Activated CD4-positive, alpha-beta T cell treated with anti-CD3 and anti-CD28 coated beads, Interleukin-2, amount 10 ng/mL, durations not matched to agents 24 days and 14 days (primary cell): ENCODE measurements at regions of chr6 and their contacts with region 1.

Region 1: GRCh38 chr6:121247386-121247785 is 86.9 kb downstream of the TBC1D32 start:
- DNase-seq: no peak
- H3K4me3 Mint-ChIP-seq: peak overlapping the region; percentile 9
- H3K27ac Mint-ChIP-seq: peak overlapping the region; percentile 9
- H3K4me1 Mint-ChIP-seq: peaks cover 12% of the 10 kb centered on the region
- H3K27me3 Mint-ChIP-seq: no peaks in the 10 kb centered on the region

Region 2: GRCh38 chr6:121334299-121335086 is 87.1 kb after region 1 on chr6 and contains the start of gene TBC1D32:
- intact Hi-C with region 1: loop called (anchors 2 kb)
- DNase-seq: peak; percentile 96
- H3K4me3 Mint-ChIP-seq: peak within 1 kb of the TSS; percentile 91
- H3K27ac Mint-ChIP-seq: peak within 1 kb of the TSS; percentile 98
- H3K4me1 Mint-ChIP-seq: peaks cover 31% of the 10 kb centered on the region
- H3K27me3 Mint-ChIP-seq: peaks cover 3% of the 10 kb centered on the region
- total RNA-seq, gene TBC1D32: 7.6 and 8.1 TPM in 2 replicates

Region 3: DNA sequence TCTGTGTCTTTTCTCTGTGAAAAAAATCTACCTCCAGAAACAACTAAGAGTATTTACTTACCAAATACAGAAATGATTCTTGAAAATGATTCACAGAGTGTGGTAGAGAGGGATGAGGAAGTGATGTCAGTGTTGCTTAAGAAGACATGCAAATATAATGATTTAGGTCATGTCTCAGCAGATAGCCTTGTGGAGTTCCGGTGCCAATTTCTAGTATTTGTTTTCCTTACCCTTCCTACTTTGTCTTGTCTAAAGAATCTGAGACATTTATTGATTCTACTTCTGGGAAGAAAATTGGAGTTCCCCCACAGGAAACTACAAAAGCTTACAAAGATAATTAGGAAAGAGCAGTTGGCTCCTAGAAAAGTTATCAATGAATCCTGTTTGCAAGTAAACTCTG is 256.8 kb after region 1 on chr6:
- intact Hi-C with region 1: no loop called
- DNase-seq: no peak
- H3K4me3 Mint-ChIP-seq: no peak overlapping the region
- H3K27ac Mint-ChIP-seq: no peak overlapping the region
- H3K4me1 Mint-ChIP-seq: peaks cover 3% of the 10 kb centered on the region
- H3K27me3 Mint-ChIP-seq: no peaks in the 10 kb centered on the region